H1 (cell line): ENCODE measurements at regions of chr13 and their contacts with region 1.

Region 1: DNA sequence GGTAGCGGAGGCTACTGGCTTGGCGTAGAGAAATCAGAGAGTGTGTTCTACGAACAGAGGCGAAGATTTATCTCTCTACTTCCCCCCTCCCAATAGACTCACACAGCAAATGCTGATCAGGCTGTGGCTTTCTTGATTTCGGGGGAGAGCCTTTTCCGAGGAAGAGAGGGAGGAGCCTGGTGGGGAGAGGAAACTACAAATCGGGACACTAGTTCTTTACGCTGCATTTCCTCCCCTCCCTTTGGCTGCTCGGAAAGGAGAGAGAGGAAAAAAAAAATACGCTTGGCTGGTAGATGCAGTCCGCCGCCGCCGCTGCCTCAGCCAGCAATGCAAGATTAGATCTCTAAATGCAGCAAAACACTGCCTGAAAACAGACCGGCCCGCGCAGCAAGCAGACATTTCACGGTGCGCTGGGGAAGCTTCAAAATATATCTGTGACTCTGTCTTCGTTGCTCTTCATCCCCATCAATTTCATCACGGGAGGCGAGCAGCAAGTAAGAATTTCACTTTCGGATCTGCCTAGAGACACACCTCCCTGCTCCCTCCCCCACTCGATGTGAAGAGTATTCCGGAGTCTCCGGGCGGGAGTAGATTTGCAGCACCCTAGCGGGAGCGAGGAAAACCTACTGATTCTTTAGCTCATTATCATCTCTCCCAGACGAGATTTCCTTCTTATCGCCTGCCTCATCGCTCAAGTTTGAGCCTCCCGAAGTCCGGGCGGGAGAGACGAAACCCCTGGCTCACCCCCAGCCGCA is at the start of gene PCDH17:
- DNase-seq: peak in 1 of 2 experiments; percentile 76
- H3K4me3 ChIP-seq: peak within 1 kb of the TSS; percentile 61 to 73 (median 66)
- H3K27ac ChIP-seq: no peak within 1 kb of the TSS
- H3K4me1 ChIP-seq: peaks cover 0 to 18% (median 7%) of the 10 kb centered on the region in 4 experiments; a peak in 6 of 7 replicates
- H3K27me3 ChIP-seq: peaks cover 29 to 69% (median 56%) of the 10 kb centered on the region in 4 experiments
- CTCF ChIP-seq: no peak
- EP300 ChIP-seq: no peak
- POLR2A ChIP-seq: no peak
- RAD21 ChIP-seq: no peak
- total RNA-seq, gene PCDH17: 0.60 and 0.67 TPM in 2 replicates

Region 2: GRCh38 chr13:57314897-57315520 is 316.7 kb before region 1 on chr13:
- CTCF ChIA-PET with region 1: no interaction called
- POLR2A ChIA-PET with region 1: no interaction called
- DNase-seq: no peak
- H3K4me3 ChIP-seq: no peak overlapping the region
- H3K27ac ChIP-seq: no peak overlapping the region
- H3K4me1 ChIP-seq: peaks cover 0 to 7% (median 2%) of the 10 kb centered on the region in 4 experiments; a peak in 3 of 7 replicates
- H3K27me3 ChIP-seq: no peaks in the 10 kb centered on the region
- CTCF ChIP-seq: no peak
- EP300 ChIP-seq: no peak
- POLR2A ChIP-seq: no peak
- RAD21 ChIP-seq: no peak

Region 3: DNA sequence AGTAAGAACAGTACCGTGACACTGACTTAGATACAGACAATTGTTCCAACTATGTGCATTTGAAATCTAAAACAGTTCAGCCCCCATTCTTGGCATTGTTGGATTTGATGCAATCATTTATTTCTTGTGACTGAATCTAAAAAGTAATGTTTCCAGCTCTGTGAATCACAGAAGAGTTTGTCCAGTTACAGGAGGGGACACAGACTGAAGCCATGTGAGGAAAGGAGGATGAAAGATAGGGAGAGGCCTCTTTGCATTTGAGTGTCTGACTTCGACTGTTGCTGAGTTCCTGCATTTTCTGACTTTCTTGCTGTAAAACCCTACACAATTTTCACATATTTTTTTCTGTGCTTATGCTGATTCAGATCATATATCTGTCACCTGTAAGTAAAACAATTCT is 179.5 kb before region 1 on chr13:
- CTCF ChIA-PET with region 1: no interaction called
- POLR2A ChIA-PET with region 1: no interaction called
- DNase-seq: no peak
- H3K4me3 ChIP-seq: no peak overlapping the region
- H3K27ac ChIP-seq: no peak overlapping the region
- H3K4me1 ChIP-seq: no peaks in the 10 kb centered on the region
- H3K27me3 ChIP-seq: no peaks in the 10 kb centered on the region
- CTCF ChIP-seq: no peak
- EP300 ChIP-seq: no peak
- POLR2A ChIP-seq: no peak
- RAD21 ChIP-seq: no peak

Region 4: GRCh38 chr13:57644106-57644505 is 12.4 kb after region 1 on chr13:
- CTCF ChIA-PET with region 1: interaction called, 10 read pairs
- POLR2A ChIA-PET with region 1: interaction called, 3 read pairs
- DNase-seq: no peak
- H3K4me3 ChIP-seq: no peak overlapping the region
- H3K27ac ChIP-seq: no peak overlapping the region
- H3K4me1 ChIP-seq: no peaks in the 10 kb centered on the region
- H3K27me3 ChIP-seq: no peaks in the 10 kb centered on the region
- CTCF ChIP-seq: no peak
- EP300 ChIP-seq: no peak
- POLR2A ChIP-seq: no peak
- RAD21 ChIP-seq: no peak

Region 5: GRCh38 chr13:57716295-57716694 is 84.6 kb after region 1 on chr13:
- CTCF ChIA-PET with region 1: interaction called, 107 read pairs
- POLR2A ChIA-PET with region 1: interaction called, 5 read pairs
- DNase-seq: no peak
- H3K4me3 ChIP-seq: no peak overlapping the region
- H3K27ac ChIP-seq: no peak overlapping the region
- H3K4me1 ChIP-seq: no peaks in the 10 kb centered on the region; a peak in 1 of 7 replicates
- H3K27me3 ChIP-seq: no peaks in the 10 kb centered on the region
- CTCF ChIP-seq: peak in 2 of 3 experiments; percentile 67 to 71; a peak in 3 of 4 replicates
- EP300 ChIP-seq: no peak
- POLR2A ChIP-seq: no peak
- RAD21 ChIP-seq: peak; percentile 85 to 88